Posterior cingulate gyrus (tissue), 11 donors: ENCODE measurements at regions of chrX and their contacts with region 1.

Region 1: GRCh38 chrX:13750204-13750603 is 15.7 kb downstream of the OFD1 start:
- DNase-seq: no peak

Region 2: DNA sequence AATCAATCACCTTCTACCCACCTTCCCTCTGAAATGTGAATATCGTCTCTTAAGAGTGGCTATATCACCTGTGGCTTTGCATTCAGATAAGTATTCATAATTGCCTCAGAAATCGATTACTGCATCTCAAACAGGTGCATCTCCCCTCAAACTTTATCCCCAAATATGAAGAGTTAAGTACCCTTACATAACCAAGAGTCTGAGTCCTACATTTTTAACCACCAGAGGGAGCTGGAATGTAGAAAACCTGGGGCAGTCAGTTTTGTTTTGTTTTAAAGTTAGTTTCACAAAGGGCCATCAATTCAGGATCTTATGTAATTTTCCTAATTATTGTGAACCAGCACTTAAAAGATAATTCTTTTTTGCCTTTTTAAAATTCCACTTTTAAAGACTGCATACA is 91.6 kb before region 1 on chrX:
- intact Hi-C with region 1: loop called (anchors 2 kb)
- DNase-seq: peak in 1 of 10 donors; percentile 9

Region 3: GRCh38 chrX:15702488-15703371 is 1952.5 kb after region 1 on chrX:
- intact Hi-C with region 1: no loop called
- DNase-seq: peak in 2 of 10 donors; percentile 64 to 76